ENCODE measurements at regions of chr10 and their contacts with region 1.

Region 1: DNA sequence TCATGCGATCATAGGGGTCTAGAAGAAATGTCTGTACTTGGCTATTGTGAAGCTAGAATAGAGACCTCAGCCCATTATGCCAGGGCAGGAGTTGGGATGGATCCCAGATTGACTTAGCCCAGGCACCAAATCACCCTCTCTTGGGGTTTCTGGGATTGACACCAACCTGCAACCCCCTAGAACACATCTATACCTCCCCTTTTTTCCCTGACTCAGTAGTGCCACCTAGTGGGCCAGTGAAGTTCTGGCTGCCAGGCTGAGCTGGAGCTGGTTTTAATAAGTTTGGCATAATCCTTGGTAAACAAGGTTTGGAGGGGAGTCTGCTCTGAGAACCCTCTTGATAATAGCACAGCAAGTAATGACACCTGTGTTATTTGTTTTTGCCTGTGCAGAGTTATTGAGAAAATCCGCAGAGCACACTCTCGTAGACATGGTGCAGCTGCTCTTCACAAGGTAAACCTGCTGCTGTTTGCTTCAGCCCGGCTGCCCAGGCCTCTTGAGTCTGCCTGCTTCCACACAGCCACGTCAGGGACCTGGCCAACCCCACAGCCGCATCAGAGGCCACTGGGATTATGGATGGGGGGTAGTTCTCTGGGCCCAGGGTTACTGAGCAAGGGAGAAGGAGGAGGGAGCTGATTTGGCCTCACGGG is 43.3 kb upstream of the NFKB2 start:
- DNase-seq: peak; percentile 41 to 75 (median 64)
- ATAC-seq: peak; percentile 85
- H3K4me3 ChIP-seq: no peak overlapping the region
- H3K4me3 Mint-ChIP-seq: no peak overlapping the region
- H3K27ac ChIP-seq: no peak overlapping the region
- H3K27ac Mint-ChIP-seq: no peak overlapping the region
- H3K4me1 ChIP-seq: no peaks in the 10 kb centered on the region
- H3K4me1 Mint-ChIP-seq: peaks cover 0 to 3% (median 0%) of the 10 kb centered on the region in 7 donors
- H3K27me3 ChIP-seq: no peaks in the 10 kb centered on the region
- H3K27me3 Mint-ChIP-seq: no peaks in the 10 kb centered on the region

Region 2: GRCh38 chr10:101961591-101962498 is 390.3 kb before region 1 on chr10:
- CTCF ChIA-PET with region 1: no interaction called
- POLR2A ChIA-PET with region 1: no interaction called
- intact Hi-C with region 1: no loop called
- DNase-seq: no peak
- ATAC-seq: no peak
- H3K4me3 ChIP-seq: no peak overlapping the region
- H3K4me3 Mint-ChIP-seq: no peak overlapping the region
- H3K27ac ChIP-seq: no peak overlapping the region
- H3K27ac Mint-ChIP-seq: no peak overlapping the region
- H3K4me1 ChIP-seq: no peaks in the 10 kb centered on the region
- H3K4me1 Mint-ChIP-seq: peaks cover 0 to 10% (median 5%) of the 10 kb centered on the region in 7 donors
- H3K27me3 ChIP-seq: no peaks in the 10 kb centered on the region
- H3K27me3 Mint-ChIP-seq: no peaks in the 10 kb centered on the region

Region 3: GRCh38 chr10:102231357-102232318 is 120.6 kb before region 1 on chr10:
- CTCF ChIA-PET with region 1: interaction called, 136 read pairs
- POLR2A ChIA-PET with region 1: interaction called, 4 read pairs
- intact Hi-C with region 1: loop called (anchors 1 kb)
- DNase-seq: peak; percentile 39 to 83 (median 63)
- ATAC-seq: peak; percentile 80
- H3K4me3 ChIP-seq: peak overlapping the region; percentile 58
- H3K4me3 Mint-ChIP-seq: peak overlapping the region; percentile 62 to 86 (median 78)
- H3K27ac ChIP-seq: no peak overlapping the region
- H3K27ac Mint-ChIP-seq: no peak overlapping the region
- H3K4me1 ChIP-seq: peaks cover 10 to 13% of the 10 kb centered on the region in 2 donors
- H3K4me1 Mint-ChIP-seq: peaks cover 5 to 16% (median 9%) of the 10 kb centered on the region in 7 donors
- H3K27me3 ChIP-seq: peaks cover 3 to 5% of the 10 kb centered on the region in 2 donors
- H3K27me3 Mint-ChIP-seq: peaks cover 57 to 76% (median 60%) of the 10 kb centered on the region in 5 donors

Region 4: GRCh38 chr10:102583435-102584417 is 231.5 kb after region 1 on chr10:
- CTCF ChIA-PET with region 1: no interaction called
- POLR2A ChIA-PET with region 1: no interaction called
- intact Hi-C with region 1: loop called in 1 of 2 experiments (anchors 1 kb)
- DNase-seq: peak; percentile 57 to 79 (median 76)
- ATAC-seq: peak; percentile 97
- H3K4me3 ChIP-seq: no peak overlapping the region
- H3K4me3 Mint-ChIP-seq: no peak overlapping the region
- H3K27ac ChIP-seq: no peak overlapping the region
- H3K27ac Mint-ChIP-seq: peak overlapping the region in 5 of 9 donors; percentile 14 to 76 (median 47)
- H3K4me1 ChIP-seq: no peaks in the 10 kb centered on the region
- H3K4me1 Mint-ChIP-seq: peaks cover 6 to 21% (median 16%) of the 10 kb centered on the region in 7 donors
- H3K27me3 ChIP-seq: no peaks in the 10 kb centered on the region
- H3K27me3 Mint-ChIP-seq: no peaks in the 10 kb centered on the region

Measured in naive thymus-derived CD4-positive, alpha-beta T cell (primary cell).